WTC11 (cell line): ENCODE measurements at regions of chr1 and their contacts with region 1.

Region 1: GRCh38 chr1:228131766-228132165 is 8.3 kb upstream of the GUK1 start:
- DNase-seq: no peak
- ATAC-seq: no peak
- H3K4me3 Mint-ChIP-seq: no peak overlapping the region
- H3K27ac Mint-ChIP-seq: no peak overlapping the region
- H3K4me1 Mint-ChIP-seq: peaks cover 6% of the 10 kb centered on the region; the same call in 1 of the 2 replicates
- H3K27me3 Mint-ChIP-seq: peaks cover 80% of the 10 kb centered on the region
- CTCF ChIP-seq: no peak

Region 2: DNA sequence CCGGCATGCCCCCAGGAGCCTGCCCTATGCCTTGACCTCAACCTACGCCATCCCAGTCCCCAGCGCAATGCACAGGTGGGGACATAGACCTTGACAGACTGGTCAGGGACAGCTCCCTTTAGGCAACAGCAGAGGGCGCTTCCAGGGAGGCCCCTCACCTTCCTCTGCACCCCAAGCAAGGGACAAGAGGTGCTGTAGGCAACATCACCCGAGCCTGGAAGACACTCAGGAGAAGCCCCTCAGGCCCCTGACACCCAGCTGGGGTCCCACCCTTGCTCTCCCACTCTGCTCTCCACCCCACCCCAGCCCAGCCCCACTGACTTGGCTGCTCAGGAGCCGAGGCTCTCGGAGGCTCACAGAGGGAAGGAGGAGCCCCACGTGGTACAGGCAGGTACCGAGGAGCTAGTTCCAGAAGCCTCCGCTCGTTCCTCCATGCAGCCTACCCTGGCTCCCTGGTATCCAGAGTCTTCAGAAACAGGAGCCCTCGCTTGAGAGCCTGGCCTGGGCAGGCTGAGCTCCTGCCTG is 127.4 kb before region 1 on chr1:
- CTCF ChIA-PET with region 1: interaction called, 24 read pairs
- POLR2A ChIA-PET with region 1: no interaction called
- DNase-seq: peak; percentile 50
- ATAC-seq: peak; percentile 66
- H3K4me3 Mint-ChIP-seq: 0 out of 2 replicates have a peak overlapping the region, but pooled peaks have one; percentile 33
- H3K27ac Mint-ChIP-seq: no peak overlapping the region
- H3K4me1 Mint-ChIP-seq: peaks cover 35% of the 10 kb centered on the region
- H3K27me3 Mint-ChIP-seq: peaks cover 95% of the 10 kb centered on the region
- CTCF ChIP-seq: peak; percentile 45

Region 3: DNA sequence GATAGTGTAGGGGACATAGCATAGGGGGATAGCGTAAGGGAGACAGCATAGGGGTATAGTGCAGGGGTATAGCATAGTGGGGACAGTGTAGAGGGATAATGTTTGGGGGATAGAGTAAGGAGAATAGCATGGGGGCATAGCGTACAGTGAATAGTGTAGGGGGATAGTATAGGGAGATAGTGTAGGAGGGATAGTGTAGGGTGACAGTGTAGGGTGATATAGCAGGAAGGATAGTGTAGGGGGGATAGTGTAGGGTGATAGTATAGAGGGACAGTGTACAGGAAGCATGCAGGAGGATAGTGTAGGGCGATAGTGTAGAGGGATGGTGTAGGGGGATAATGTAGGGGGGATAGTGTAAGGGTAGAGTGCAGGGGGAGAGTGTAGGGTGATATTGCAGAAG is 60.9 kb before region 1 on chr1:
- CTCF ChIA-PET with region 1: no interaction called
- POLR2A ChIA-PET with region 1: no interaction called
- DNase-seq: no peak
- ATAC-seq: no peak
- H3K4me3 Mint-ChIP-seq: no peak overlapping the region
- H3K27ac Mint-ChIP-seq: no peak overlapping the region
- H3K4me1 Mint-ChIP-seq: 0 out of 2 replicates have a peak, but pooled peaks cover 4% of the 10 kb centered on the region
- H3K27me3 Mint-ChIP-seq: peaks cover 86% of the 10 kb centered on the region
- CTCF ChIP-seq: no peak

Region 4: DNA sequence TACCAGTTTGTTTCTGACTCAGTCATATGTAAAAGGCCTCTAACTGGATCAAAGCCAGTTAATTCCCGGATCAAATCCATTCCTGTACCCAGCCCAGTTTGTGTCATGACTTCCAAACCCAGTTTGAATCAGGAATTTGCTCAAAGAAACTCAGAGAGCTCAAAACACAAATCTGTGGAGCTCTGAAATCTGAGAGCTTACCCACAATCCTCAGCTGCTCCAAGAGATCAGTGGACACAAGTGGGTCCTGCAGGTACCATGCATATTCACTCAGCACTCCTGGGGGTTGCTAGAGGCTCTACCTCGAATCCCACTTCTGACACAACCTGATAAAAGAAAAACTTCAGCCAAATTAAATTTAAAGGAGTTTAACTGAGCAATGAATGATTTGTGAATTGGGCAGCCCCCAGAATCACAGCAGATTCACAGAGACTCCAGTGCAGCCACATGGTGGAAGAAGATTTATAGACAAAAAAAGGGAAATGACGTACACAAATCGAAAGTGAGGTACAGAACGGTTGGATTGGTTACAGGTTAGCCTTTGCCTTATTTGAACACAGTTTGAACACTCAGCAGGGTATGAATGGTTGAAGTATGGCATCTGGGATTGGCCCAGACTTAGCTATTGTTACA is 10.8 kb before region 1 on chr1:
- CTCF ChIA-PET with region 1: interaction called, 13 read pairs
- POLR2A ChIA-PET with region 1: no interaction called
- DNase-seq: no peak
- ATAC-seq: no peak
- H3K4me3 Mint-ChIP-seq: no peak overlapping the region
- H3K27ac Mint-ChIP-seq: no peak overlapping the region
- H3K4me1 Mint-ChIP-seq: no peaks in the 10 kb centered on the region
- H3K27me3 Mint-ChIP-seq: peaks cover 67% of the 10 kb centered on the region
- CTCF ChIP-seq: no peak

Region 5: GRCh38 chr1:228165372-228166169 is 33.8 kb after region 1 on chr1 and contains the start of gene IBA57:
- CTCF ChIA-PET with region 1: interaction called, 39 read pairs
- POLR2A ChIA-PET with region 1: no interaction called
- DNase-seq: peak; percentile 99
- ATAC-seq: peak; percentile 94
- H3K4me3 Mint-ChIP-seq: peak within 1 kb of the TSS; percentile 85
- H3K27ac Mint-ChIP-seq: peak within 1 kb of the TSS; percentile 98
- H3K4me1 Mint-ChIP-seq: peaks cover 13% of the 10 kb centered on the region; the same call in 1 of the 2 replicates
- H3K27me3 Mint-ChIP-seq: peaks cover 6% of the 10 kb centered on the region; the same call in 1 of the 2 replicates
- CTCF ChIP-seq: peak; percentile 71
- total RNA-seq, gene IBA57: 11.4 to 12.5 TPM (median 12.1 TPM) in 3 replicates

Region 6: DNA sequence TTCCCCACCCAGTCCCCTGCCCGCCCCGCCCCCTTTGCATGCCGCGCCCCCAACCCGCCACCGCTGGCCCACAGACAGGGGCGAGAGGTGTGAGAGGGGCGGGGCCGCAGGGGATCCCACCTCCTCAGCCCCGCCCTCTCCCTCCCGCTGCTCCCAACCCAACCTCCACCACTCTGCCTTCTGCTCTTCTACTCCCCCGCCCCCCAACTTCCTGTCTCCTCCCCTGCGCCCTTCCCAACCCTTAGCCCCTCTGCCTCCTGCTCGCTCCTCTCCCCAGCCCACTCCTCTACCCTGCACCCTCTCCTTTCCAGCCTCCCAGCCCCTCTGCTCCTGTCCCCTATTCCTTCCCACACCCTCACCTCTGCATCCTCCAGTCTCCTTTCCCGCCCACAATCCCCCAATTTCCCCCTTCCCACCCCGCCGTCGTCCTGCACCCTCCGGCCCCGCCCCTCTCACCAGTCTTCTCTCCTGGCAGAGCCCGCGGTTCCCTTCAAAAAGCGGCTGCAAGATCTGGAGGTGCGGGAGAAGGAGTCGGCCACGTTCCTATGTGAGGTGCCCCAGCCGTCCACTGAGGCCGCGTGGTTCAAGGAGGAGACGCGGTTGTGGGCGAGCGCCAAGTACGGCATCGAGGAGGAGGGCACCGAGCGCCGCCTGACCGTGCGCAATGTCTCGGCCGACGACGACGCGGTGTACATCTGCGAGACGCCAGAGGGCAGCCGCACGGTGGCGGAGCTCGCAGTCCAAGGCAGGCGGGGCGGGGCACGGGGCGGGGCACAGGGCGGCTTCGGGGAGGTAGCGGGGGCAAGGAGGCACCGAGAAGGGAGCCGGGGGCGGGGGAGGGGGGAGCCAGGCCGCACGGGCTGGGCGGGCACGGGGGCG is 81.4 kb after region 1 on chr1:
- CTCF ChIA-PET with region 1: interaction called, 18 read pairs
- POLR2A ChIA-PET with region 1: no interaction called
- DNase-seq: peak; percentile 94
- ATAC-seq: peak; percentile 82
- H3K4me3 Mint-ChIP-seq: peak overlapping the region; percentile 84
- H3K27ac Mint-ChIP-seq: peak overlapping the region; percentile 95
- H3K4me1 Mint-ChIP-seq: peaks cover 3% of the 10 kb centered on the region; the same call in 1 of the 2 replicates
- H3K27me3 Mint-ChIP-seq: peaks cover 14% of the 10 kb centered on the region
- CTCF ChIP-seq: peak; percentile 22; the same call in 1 of the 2 replicates